PC-9 (cell line): ENCODE measurements at regions of chr6 and their contacts with region 1.

Region 1: DNA sequence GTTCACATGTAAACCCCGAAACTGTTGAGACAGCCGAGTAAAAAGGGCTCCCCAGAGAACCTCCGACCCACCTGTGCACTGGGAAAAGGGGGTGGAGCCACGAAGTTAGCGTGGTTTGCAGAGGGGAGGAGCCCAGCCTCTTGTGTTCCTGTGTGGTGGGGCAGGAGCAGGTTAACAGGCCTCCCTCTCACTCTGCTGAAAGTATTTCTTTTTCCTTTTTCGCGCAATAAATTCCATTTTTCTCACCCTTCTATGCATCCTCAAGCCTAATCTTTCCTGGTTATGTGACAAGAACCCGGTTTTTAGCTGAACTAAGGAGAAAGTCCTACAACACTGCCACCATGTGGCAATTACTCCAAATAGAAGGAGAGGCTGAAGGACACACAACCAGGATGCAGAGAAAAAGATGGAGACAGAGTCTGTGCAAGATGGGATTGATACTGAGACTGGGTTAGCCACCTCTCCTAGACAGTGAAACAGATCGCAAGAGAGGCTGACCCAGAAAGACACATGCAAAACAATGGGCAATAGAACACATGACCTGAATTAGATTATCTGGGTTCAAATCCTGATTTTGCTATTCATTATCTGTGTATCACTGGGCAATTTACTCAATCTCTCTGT is 168.7 kb upstream of the PRSS16 start:
- DNase-seq: peak; percentile 44 to 57
- H3K4me3 ChIP-seq: peak overlapping the region; percentile 60; the same call in 1 of the 2 replicates
- H3K27ac ChIP-seq: no peak overlapping the region
- H3K4me1 ChIP-seq: 0 out of 2 replicates have a peak, but pooled peaks cover 3% of the 10 kb centered on the region
- H3K27me3 ChIP-seq: no peaks in the 10 kb centered on the region
- CTCF ChIP-seq: peak; percentile 90

Region 2: DNA sequence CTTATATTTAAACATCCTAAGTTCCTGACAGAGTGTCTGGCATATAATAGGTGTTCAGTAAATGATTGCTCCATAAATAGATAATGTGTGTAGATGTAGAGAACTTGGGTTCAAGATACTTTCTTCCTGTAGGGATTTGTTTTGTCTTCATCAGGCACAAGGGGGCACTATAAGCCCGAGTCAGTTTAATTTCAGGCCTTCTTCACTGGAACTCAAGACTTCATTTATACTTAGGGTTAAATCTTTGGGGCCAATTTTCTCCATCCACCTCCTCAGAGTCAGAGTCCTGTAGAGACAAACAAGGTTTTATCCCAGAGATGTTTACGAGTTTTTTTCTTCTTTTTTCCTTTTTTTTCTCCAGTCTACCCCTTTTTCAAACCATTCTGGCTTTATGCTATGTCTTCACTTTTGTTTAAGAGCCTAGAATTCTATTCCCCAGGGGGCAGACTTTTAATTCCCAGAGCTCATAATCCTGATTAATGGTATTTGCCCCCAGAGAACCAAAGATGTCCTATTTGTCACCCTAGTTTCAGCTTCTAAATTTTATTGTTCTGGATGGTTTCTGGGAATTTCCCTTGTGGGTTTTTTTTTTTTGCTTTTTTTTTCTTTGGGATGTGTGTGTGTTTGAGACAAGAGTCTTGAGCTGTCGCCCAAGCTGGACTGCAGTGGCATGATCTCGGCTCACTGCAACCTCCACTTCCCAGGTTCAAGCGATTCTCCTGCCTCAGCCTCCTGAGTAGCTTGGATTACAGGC is 903.2 kb before region 1 on chr6:
- CTCF ChIA-PET with region 1: no interaction called
- POLR2A ChIA-PET with region 1: no interaction called
- intact Hi-C with region 1: loop called (anchors 5 kb)
- DNase-seq: no peak
- H3K4me3 ChIP-seq: no peak overlapping the region
- H3K27ac ChIP-seq: no peak overlapping the region
- H3K4me1 ChIP-seq: peaks cover 23% of the 10 kb centered on the region
- H3K27me3 ChIP-seq: no peaks in the 10 kb centered on the region
- CTCF ChIP-seq: peak; percentile 82

Region 3: GRCh38 chr6:26607434-26608230 is 471.2 kb before region 1 on chr6:
- CTCF ChIA-PET with region 1: no interaction called
- POLR2A ChIA-PET with region 1: no interaction called
- intact Hi-C with region 1: loop called (anchors 1 kb)
- DNase-seq: peak; percentile 49 to 56
- H3K4me3 ChIP-seq: peak overlapping the region; percentile 37; the same call in 1 of the 2 replicates
- H3K27ac ChIP-seq: no peak overlapping the region
- H3K4me1 ChIP-seq: no peaks in the 10 kb centered on the region
- H3K27me3 ChIP-seq: no peaks in the 10 kb centered on the region
- CTCF ChIP-seq: peak; percentile 83

Region 4: GRCh38 chr6:27177485-27178406 is 98.9 kb after region 1 on chr6:
- CTCF ChIA-PET with region 1: no interaction called
- POLR2A ChIA-PET with region 1: no interaction called
- intact Hi-C with region 1: no loop called
- DNase-seq: peak; percentile 80 to 88
- H3K4me3 ChIP-seq: peak overlapping the region; percentile 97
- H3K27ac ChIP-seq: peak overlapping the region; percentile 67
- H3K4me1 ChIP-seq: no peaks in the 10 kb centered on the region; the same call in 1 of the 2 replicates
- H3K27me3 ChIP-seq: no peaks in the 10 kb centered on the region
- CTCF ChIP-seq: peak; percentile 67

Region 5: DNA sequence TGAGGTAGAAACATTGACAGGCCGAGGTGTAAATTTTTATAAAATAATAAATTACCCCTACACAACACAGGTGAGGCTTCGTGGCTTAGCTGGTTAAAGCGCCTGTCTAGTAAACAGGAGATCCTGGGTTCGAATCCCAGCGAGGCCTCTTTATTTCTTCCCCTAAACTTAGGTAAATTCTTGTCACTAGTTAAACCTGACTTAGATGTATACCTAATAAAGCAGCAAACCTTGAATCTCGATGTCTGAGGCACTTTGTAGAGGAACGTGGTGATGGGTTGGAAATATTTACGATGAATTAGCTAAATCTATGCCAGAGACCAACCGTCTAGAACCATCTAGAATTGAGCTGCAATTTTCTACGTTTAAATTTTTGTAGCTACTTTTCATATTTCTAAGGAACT is 647.8 kb after region 1 on chr6:
- CTCF ChIA-PET with region 1: no interaction called
- POLR2A ChIA-PET with region 1: no interaction called
- intact Hi-C with region 1: no loop called
- DNase-seq: peak in 1 of 2 experiments; percentile 44
- H3K4me3 ChIP-seq: no peak overlapping the region
- H3K27ac ChIP-seq: no peak overlapping the region
- H3K4me1 ChIP-seq: peaks cover 7% of the 10 kb centered on the region; the same call in 1 of the 2 replicates
- H3K27me3 ChIP-seq: no peaks in the 10 kb centered on the region; the same call in 1 of the 2 replicates
- CTCF ChIP-seq: no peak

Region 6: GRCh38 chr6:27743818-27744217 is 665.0 kb after region 1 on chr6:
- CTCF ChIA-PET with region 1: interaction called, 24 read pairs
- POLR2A ChIA-PET with region 1: no interaction called
- intact Hi-C with region 1: no loop called
- DNase-seq: no peak
- H3K4me3 ChIP-seq: no peak overlapping the region
- H3K27ac ChIP-seq: no peak overlapping the region
- H3K4me1 ChIP-seq: no peaks in the 10 kb centered on the region
- H3K27me3 ChIP-seq: no peaks in the 10 kb centered on the region
- CTCF ChIP-seq: no peak